ENCODE measurements at regions of chr22 and their contacts with region 1.

Region 1: DNA sequence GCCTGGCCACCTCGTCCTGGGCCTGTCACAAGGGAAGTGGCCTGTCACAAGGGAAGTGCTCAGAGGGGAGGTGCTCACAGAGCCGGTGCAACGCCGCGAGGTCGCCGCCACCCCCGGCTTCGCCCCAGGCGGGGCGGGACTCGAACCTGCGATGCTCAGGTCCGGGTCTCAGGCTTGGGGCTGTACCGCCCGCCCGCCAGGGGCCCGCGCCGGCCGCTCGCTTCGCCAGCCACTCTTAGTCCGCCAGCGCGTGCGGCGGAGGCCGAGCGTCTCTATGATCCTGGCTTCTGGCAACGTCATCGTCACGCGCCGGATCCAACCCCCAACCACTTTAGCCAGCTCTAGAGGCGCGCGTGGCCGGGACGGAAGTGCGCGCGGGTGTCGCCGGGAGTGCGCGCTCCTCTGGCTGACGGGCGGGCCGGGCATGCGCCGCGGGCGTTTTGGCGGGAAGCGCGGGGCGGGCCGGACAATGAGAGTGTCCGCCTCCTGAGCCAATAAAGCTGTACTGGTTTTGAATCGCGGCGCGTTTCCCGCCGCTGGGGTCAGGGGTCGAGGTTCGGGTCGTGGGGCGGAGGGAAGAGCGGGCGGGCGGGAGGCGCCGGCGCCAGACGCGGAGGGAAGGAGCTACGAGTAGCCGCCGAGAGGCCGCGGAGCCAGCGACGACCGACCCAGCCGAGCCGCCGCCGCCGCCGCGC is at the start of gene TRMT2A:
- DNase-seq: peak; percentile 99
- ATAC-seq: peak; percentile 79
- H3K4me3 Mint-ChIP-seq: peak within 1 kb of the TSS; percentile 94
- H3K27ac Mint-ChIP-seq: peak within 1 kb of the TSS; percentile 91
- H3K4me1 Mint-ChIP-seq: peaks cover 47% of the 10 kb centered on the region
- H3K27me3 Mint-ChIP-seq: no peaks in the 10 kb centered on the region
- total RNA-seq, gene TRMT2A: 84.4 to 85.9 TPM

Region 2: DNA sequence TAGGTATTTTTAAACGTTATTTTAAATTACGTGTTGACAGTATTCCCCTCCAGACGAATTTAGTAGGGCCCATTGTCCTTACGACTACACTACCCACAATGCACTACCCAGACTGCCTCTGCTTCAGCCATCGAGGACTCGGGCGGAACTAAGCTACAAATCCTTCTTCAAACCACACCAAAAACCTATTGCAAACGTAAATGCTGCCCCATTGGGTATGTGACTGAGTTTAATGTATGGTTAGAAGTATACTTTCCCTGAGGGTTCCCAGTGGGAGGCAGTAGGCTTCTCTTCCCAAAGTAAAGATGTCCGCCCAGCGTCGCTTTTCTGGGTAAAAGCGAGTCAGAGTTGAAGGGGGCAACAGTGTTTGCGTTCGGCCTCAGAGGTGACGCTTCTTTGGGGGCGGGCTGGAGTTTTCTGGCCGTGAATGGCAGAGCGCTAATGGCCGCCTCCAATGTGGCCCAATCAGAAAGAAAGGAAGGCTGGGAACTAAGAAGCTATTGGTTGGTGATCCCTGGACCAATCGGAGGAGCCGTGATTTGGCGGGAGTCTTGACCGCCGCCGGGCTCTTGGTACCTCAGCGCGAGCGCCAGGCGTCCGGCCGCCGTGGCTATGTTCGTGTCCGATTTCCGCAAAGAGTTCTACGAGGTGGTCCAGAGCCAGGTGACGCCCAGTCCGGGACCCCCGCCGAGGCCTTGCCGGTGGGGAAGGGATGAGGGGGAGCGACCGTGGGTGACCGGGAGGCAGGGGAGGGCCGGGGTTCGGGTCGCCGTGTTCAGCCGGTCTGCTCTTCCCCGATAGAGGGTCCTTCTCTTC is 637.5 kb before region 1 on chr22 and contains the start of gene CDC45:
- CTCF ChIA-PET with region 1: no interaction called
- POLR2A ChIA-PET with region 1: no interaction called
- intact Hi-C with region 1: loop called in 1 of 2 experiments (anchors 1 kb)
- DNase-seq: peak; percentile 97
- ATAC-seq: peak; percentile 91
- H3K4me3 Mint-ChIP-seq: peak within 1 kb of the TSS; percentile 99
- H3K27ac Mint-ChIP-seq: peak within 1 kb of the TSS; percentile 99
- H3K4me1 Mint-ChIP-seq: peaks cover 45% of the 10 kb centered on the region
- H3K27me3 Mint-ChIP-seq: no peaks in the 10 kb centered on the region
- total RNA-seq, gene CDC45: 103 to 111 TPM

Region 3: DNA sequence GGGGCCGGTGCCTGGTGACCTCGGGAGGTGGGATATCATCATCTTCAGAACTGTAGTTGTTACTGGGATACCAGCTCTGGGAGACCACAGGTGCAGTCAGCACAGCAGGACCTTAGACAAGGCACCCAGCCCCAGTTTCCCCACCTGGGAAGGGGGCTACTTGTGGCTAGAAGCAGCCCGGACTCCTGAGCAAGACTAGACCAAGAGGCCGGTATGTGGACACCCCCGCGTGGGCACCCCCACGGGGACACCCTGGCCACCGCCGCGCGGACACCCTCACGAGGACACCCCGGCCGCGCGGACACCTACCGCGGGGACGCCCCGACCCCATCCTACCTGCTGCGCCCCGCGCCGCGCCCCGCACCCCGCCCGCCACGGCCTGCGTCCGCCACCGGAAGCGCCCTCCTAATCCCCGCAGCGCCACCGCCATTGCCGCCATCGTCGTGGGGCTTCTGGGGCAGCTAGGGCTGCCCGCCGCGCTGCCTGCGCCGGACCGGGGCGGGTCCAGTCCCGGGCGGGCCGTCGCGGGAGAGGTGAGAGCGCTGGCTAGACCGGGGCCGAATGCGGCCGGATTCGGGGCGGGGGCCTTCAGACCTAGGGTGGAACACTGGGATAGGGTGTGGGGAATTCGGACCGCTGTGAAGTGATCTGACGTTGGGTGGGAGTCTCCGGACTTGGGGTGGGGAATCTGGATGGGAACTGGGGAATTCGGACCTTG is 175.6 kb before region 1 on chr22 and contains the starts of genes COMT and TXNRD2:
- CTCF ChIA-PET with region 1: no interaction called
- POLR2A ChIA-PET with region 1: no interaction called
- intact Hi-C with region 1: loop called in 1 of 2 experiments (anchors 1 kb)
- DNase-seq: peak; percentile 83
- ATAC-seq: peak; percentile 85
- H3K4me3 Mint-ChIP-seq: peak within 1 kb of the TSS; percentile 98
- H3K27ac Mint-ChIP-seq: peak within 1 kb of the TSS; percentile 98
- H3K4me1 Mint-ChIP-seq: peaks cover 27% of the 10 kb centered on the region
- H3K27me3 Mint-ChIP-seq: no peaks in the 10 kb centered on the region
- total RNA-seq, gene COMT: 63.5 to 78.5 TPM
- total RNA-seq, gene TXNRD2: 24.1 to 25.3 TPM

Region 4: GRCh38 chr22:20079745-20080444 is 37.2 kb before region 1 on chr22 and contains the start of gene DGCR8:
- CTCF ChIA-PET with region 1: no interaction called
- POLR2A ChIA-PET with region 1: no interaction called
- intact Hi-C with region 1: loop called (anchors 1 kb)
- DNase-seq: peak; percentile 78
- ATAC-seq: peak; percentile 92
- H3K4me3 Mint-ChIP-seq: peak within 1 kb of the TSS; percentile 88
- H3K27ac Mint-ChIP-seq: peak within 1 kb of the TSS; percentile 80
- H3K4me1 Mint-ChIP-seq: peaks cover 36% of the 10 kb centered on the region
- H3K27me3 Mint-ChIP-seq: no peaks in the 10 kb centered on the region
- total RNA-seq, gene DGCR8: 31.8 to 32.3 TPM

Region 5: DNA sequence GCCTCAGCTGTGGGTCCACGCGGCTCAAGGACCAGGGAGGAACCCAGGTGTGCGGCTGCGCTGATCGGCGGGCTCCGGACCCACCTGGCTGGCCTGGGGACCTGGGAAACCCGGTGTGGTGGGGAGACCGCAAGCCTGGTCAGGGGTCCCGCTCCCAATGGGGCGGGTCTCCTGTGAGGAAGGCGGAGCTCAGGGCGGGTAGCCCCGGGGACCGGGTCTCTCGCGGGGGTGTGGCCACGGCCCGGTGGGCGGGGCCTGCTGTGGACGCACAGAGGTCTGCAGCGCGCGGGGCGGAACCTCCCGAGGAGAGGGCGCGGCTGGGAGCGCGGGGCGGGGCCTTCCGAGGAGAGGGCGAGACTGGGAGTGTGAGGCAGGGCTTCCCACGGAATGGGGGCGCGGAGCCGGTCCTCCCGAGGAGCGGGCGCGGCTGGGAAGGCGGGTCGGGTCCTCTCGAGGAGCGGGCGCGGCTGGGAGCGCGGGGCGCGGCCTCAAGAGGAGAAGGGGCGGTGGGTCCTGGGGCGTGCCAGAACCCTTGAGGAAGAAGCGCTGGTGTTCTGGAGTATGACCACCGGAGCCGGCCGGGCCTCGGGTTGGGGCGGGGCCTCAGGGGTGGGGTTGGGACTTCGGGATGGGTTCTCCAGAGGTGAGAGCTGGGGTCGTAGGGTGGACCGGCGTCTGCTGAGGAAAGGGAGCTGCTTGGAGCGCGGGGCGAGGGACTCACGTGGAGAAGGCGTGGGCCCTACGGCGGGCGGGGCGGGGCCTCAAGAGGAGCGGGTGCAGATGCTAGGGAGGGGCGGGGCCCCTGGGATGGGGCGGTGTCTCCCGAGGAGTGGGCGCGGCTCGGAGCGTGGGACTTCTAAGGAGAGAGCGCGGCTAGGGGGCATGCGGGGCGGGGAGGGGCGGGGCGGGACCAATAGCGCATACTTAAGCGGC is 182.0 kb after region 1 on chr22:
- CTCF ChIA-PET with region 1: no interaction called
- POLR2A ChIA-PET with region 1: no interaction called
- intact Hi-C with region 1: loop called in 1 of 2 experiments (anchors 1 kb)
- DNase-seq: peak; percentile 95
- ATAC-seq: peak; percentile 91
- H3K4me3 Mint-ChIP-seq: peak overlapping the region; percentile 71
- H3K27ac Mint-ChIP-seq: peak overlapping the region; percentile 43
- H3K4me1 Mint-ChIP-seq: no peaks in the 10 kb centered on the region
- H3K27me3 Mint-ChIP-seq: peaks cover 7% of the 10 kb centered on the region

Region 6: GRCh38 chr22:20507253-20508066 is 390.4 kb after region 1 on chr22 and contains the start of gene MED15:
- CTCF ChIA-PET with region 1: no interaction called
- POLR2A ChIA-PET with region 1: interaction called, 3 read pairs
- intact Hi-C with region 1: loop called in 1 of 2 experiments (anchors 1 kb)
- DNase-seq: peak; percentile 95
- ATAC-seq: peak; percentile 85
- H3K4me3 Mint-ChIP-seq: peak within 1 kb of the TSS; percentile 85
- H3K27ac Mint-ChIP-seq: peak within 1 kb of the TSS; percentile 96
- H3K4me1 Mint-ChIP-seq: peaks cover 50% of the 10 kb centered on the region
- H3K27me3 Mint-ChIP-seq: no peaks in the 10 kb centered on the region
- total RNA-seq, gene MED15: 84.4 to 107 TPM